Mammary epithelial cell (primary cell): ENCODE measurements at regions of chr15 and their contacts with region 1.

Region 1: DNA sequence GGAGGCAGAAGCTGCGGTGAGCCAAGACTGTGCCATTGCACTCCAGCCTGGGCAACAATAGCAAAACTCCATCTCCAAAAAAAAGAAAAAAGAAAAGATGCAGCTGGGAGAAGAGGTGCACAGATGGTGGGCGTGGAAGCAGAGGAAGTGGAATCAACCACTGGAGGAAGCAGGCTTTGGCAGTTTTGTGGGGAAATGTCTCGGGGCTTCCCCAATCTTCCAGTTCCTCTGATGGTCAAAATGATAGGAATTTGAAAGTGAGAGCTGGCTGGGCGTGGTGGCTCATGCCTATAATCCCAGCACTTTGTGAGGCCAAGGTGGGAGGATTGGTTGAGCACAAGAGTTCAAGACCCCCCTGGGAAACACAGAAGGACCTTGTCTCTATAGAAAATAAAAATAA is 48.1 kb upstream of the SMAD3 start:
- DNase-seq: no peak
- H3K4me3 ChIP-seq: no peak overlapping the region
- H3K27ac ChIP-seq: no peak overlapping the region
- H3K4me1 ChIP-seq: peaks cover 16% of the 10 kb centered on the region
- H3K27me3 ChIP-seq: no peaks in the 10 kb centered on the region
- CTCF ChIP-seq: no peak

Region 2: GRCh38 chr15:66966257-66966656 is 51.1 kb before region 1 on chr15:
- CTCF ChIA-PET with region 1: no interaction called
- dilution Hi-C with region 1: loop called (anchors 5 kb)
- in situ Hi-C with region 1: no loop called
- intact Hi-C with region 1: no loop called
- DNase-seq: no peak
- H3K4me3 ChIP-seq: no peak overlapping the region
- H3K27ac ChIP-seq: no peak overlapping the region
- H3K4me1 ChIP-seq: no peaks in the 10 kb centered on the region
- H3K27me3 ChIP-seq: no peaks in the 10 kb centered on the region
- CTCF ChIP-seq: peak; percentile 30 to 40

Region 3: GRCh38 chr15:66981771-66982170 is 35.5 kb before region 1 on chr15:
- CTCF ChIA-PET with region 1: no interaction called
- dilution Hi-C with region 1: no loop called
- in situ Hi-C with region 1: no loop called
- intact Hi-C with region 1: no loop called
- DNase-seq: no peak
- H3K4me3 ChIP-seq: no peak overlapping the region
- H3K27ac ChIP-seq: no peak overlapping the region
- H3K4me1 ChIP-seq: peaks cover 6% of the 10 kb centered on the region
- H3K27me3 ChIP-seq: no peaks in the 10 kb centered on the region
- CTCF ChIP-seq: no peak